G401 (cell line): ENCODE measurements at regions of chr1 and their contacts with region 1.

Region 1: GRCh38 chr1:157963713-157964112 is 29.7 kb upstream of the KIRREL1 start:
- DNase-seq: peak; percentile 36

Region 2: GRCh38 chr1:157862114-157863070 is 101.3 kb before region 1 on chr1:
- in situ Hi-C with region 1: no loop called
- DNase-seq: no peak

Region 3: DNA sequence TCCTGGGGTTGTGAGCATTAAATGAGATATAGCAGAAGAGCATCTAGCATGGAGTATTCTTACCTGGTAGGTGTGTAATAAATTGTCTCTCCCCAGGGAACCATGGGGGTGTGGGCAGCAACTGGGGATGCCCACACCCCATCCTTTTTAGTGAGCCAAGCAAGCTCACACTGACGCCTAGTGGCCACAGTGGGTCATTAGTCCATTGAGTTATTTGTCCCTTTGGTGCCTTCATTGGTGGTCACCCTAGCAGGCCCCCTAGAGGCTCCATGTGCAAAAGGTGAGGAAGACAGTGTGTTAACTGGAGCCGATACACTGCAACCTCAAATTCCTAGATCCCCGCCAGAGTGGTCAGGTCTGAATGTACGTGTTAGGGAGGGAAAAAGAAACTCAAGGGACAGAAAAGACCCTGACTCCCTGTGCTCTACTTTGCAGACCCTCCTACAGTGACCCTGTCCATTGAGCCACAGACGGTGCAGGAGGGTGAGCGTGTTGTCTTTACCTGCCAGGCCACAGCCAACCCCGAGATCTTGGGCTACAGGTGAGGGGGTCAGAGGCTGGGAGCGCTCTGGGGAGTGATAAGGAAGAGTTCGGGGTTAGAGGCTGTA is 123.7 kb after region 1 on chr1:
- in situ Hi-C with region 1: no loop called
- DNase-seq: peak; percentile 49

Region 4: GRCh38 chr1:158124999-158125398 is 161.3 kb after region 1 on chr1:
- in situ Hi-C with region 1: loop called (anchors 25 kb)
- DNase-seq: peak; percentile 76